ENCODE measurements at regions of chr10 and their contacts with region 1.

Region 1: DNA sequence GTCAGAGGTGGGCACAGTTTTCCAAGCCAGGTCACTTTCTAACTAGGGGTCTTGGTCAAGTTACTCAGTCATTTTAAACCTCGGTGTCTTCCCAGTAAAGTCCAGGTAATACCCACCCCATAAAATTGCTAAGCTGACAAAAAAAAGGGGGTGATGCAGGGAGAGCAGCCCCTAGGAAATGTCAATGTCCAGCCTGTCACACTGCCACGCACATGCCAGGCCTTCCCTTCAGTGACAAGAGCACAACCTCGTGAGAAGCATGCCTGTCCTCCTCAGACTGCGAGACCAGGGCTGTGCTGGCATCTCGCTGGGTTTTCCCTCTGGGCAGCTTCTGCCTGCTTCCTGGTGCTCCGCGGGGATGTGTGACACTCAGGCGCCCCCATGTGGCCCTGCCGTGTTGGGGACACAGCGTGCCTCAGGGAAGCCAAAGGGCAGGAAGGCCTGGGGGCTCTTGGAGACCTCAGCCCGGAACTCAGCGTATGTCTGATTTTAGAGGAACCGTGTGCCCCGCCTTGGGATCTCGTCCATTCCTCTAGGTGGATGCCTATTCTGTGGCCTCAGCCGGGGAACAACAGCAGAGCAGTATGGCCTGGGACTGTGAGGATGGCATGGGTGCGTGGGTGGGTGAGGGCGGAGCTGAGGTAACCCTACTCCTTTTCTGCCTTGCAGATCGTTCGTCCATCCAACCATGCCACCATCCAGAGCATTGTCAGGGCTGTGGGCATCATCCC is 10.2 kb upstream of the GDF2 start:
- DNase-seq: peak; percentile 76
- H3K4me3 ChIP-seq: no peak overlapping the region
- H3K27ac ChIP-seq: no peak overlapping the region
- H3K4me1 ChIP-seq: no peaks in the 10 kb centered on the region
- CTCF ChIP-seq: peak; percentile 87

Region 2: DNA sequence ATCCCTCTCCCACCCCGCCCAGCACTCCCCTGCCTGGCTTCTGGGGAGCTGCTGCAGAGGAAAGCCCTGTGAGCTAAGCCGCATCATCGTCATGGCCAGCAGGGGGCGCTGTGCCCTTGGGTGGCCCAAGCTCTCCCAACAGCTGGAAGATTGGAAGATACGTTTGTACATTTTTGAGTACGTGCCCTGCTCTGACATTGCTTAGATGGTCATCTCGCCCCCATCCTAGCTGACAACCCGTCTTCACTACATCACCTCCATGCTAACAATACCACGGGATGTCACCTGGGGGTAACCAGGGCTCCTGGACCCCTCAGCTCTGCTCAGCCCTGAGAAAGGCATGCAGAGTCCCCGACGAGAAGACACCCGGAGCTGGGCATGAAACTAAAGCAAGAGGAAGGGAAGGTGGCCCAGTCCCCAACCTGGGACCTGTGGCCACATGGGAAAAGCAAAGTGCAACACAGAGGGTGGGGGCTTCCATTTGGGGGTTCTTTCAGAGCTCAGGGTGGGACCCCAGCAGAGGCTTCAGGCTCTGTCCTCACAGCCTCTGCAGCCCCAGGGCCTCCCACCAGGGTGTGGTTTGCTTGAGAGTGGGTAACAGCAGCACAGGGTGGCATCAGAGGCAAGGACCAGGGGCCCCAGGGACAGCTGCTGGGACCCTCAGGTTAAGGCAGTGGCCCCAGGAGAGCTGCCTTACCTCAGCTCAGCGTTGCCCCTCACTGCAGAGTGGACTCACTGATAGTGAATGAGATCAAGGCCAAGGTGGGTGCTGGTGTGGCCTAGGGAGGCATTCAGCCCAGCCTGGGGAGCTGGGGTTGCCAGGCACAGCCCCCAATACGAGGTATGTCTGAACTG is 264.2 kb before region 1 on chr10:
- CTCF ChIA-PET with region 1: interaction called, 10 read pairs
- POLR2A ChIA-PET with region 1: no interaction called
- intact Hi-C with region 1: loop called (anchors 2 kb)
- DNase-seq: peak; percentile 62
- H3K4me3 ChIP-seq: no peak overlapping the region
- H3K27ac ChIP-seq: no peak overlapping the region
- H3K4me1 ChIP-seq: no peaks in the 10 kb centered on the region
- CTCF ChIP-seq: peak; percentile 87

Region 3: DNA sequence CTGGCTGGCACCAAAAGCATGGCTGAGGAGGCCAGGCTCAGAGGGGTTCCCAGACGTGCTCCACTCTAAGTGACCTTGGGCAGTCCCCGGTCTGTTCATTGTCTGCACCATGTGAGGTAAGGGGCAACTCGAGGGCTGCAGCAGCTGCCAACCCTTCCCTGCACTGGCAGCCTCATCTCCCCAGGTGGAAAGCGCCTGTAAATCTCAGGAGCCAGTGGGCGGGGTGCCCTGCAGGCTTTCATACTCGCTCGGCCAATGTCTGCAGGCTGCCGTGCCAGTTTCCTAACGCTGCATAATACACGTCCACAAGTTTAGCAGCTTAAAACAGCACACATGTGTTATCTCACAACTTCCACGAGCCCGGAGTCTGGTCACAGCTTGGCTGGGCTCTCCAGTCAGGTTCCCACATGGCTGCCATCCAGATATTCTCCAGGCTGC is 24.7 kb before region 1 on chr10:
- CTCF ChIA-PET with region 1: no interaction called
- POLR2A ChIA-PET with region 1: no interaction called
- intact Hi-C with region 1: no loop called
- DNase-seq: no peak
- H3K4me3 ChIP-seq: no peak overlapping the region
- H3K27ac ChIP-seq: no peak overlapping the region
- H3K4me1 ChIP-seq: no peaks in the 10 kb centered on the region
- CTCF ChIP-seq: no peak

Region 4: DNA sequence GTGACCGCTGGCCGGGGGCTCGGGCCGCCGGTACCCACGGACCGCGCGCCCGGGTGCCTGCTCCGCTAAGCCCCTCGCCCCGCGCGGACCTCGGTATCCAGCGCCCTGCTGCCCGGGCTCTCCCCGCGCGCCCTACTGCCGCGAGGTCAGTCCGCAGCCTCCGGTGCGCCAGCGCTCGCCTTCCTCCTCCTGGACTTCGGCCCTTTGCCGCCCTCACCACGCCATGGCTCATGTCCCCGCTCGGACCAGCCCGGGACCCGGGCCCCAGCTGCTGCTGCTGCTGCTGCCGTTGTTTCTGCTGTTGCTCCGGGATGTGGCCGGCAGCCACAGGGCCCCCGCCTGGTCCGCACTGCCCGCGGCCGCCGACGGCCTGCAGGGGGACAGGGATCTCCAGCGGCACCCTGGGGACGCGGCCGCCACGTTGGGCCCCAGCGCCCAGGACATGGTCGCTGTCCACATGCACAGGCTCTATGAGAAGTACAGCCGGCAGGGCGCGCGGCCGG is 11.6 kb before region 1 on chr10:
- CTCF ChIA-PET with region 1: no interaction called
- POLR2A ChIA-PET with region 1: no interaction called
- intact Hi-C with region 1: no loop called
- DNase-seq: no peak
- H3K4me3 ChIP-seq: no peak overlapping the region
- H3K27ac ChIP-seq: no peak overlapping the region
- H3K4me1 ChIP-seq: no peaks in the 10 kb centered on the region
- CTCF ChIP-seq: no peak

Region 5: GRCh38 chr10:47374611-47375536 is 62.8 kb after region 1 on chr10:
- CTCF ChIA-PET with region 1: no interaction called
- POLR2A ChIA-PET with region 1: no interaction called
- intact Hi-C with region 1: loop called (anchors 10 kb)
- DNase-seq: no peak
- H3K4me3 ChIP-seq: no peak overlapping the region
- H3K27ac ChIP-seq: no peak overlapping the region
- H3K4me1 ChIP-seq: no peaks in the 10 kb centered on the region
- CTCF ChIP-seq: no peak

Region 6: GRCh38 chr10:47458466-47459154 is 146.5 kb after region 1 on chr10:
- CTCF ChIA-PET with region 1: no interaction called
- POLR2A ChIA-PET with region 1: no interaction called
- intact Hi-C with region 1: no loop called
- DNase-seq: no peak
- H3K4me3 ChIP-seq: no peak overlapping the region
- H3K27ac ChIP-seq: no peak overlapping the region
- H3K4me1 ChIP-seq: no peaks in the 10 kb centered on the region
- CTCF ChIP-seq: no peak

Measured in OCI-LY7 (cell line).